CD14-positive monocyte (primary cell): ENCODE measurements at regions of chr7 and their contacts with region 1.

Region 1: DNA sequence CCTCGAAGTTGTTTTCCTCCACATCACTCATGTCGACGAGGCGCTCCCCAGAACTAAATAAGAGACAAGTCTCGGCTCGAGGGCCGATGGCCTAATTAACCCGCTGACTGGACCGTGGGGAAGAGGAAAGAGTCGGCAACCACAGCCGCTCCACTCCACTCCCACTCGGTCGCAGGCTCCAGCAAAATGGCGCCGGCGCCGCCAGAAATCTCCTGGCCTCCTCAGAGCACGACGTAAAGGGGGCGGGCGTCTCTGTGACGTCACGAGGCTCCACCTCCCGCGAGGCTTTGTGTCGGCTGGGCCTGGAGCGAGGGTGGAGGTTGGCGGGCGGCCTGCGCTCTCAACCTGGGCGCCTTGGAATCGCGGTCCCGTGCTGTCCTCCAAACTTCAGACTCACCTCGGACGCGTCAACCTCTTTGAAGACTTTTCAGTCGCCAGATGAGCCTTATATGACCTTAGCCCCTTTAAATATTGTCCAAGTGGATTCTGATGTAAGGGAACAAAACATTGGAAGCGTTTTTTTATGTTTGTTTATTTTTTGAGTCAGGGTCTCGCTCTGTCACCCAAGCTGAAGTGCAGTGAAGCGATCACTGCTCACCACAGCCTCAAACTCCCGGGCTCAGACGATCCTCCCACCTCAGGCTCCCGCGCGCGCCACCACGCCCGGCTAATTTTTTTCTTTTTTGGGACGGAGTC is at the start of gene TRA2A:
- DNase-seq: peak; percentile 93 to 95 (median 94)
- H3K4me3 ChIP-seq: peak within 1 kb of the TSS; percentile 77 to 97 (median 84)
- H3K4me3 Mint-ChIP-seq: peak within 1 kb of the TSS; percentile 98 to 99
- H3K27ac ChIP-seq: peak within 1 kb of the TSS; percentile 96 to 99
- H3K27ac Mint-ChIP-seq: peak within 1 kb of the TSS; percentile 100
- H3K4me1 ChIP-seq: peaks cover 11 to 34% of the 10 kb centered on the region in 2 donors
- H3K4me1 Mint-ChIP-seq: peaks cover 39% of the 10 kb centered on the region
- H3K27me3 ChIP-seq: no peaks in the 10 kb centered on the region
- H3K27me3 Mint-ChIP-seq: peaks cover 0 to 2% (median 2%) of the 10 kb centered on the region in 3 donors
- CTCF ChIP-seq: no peak
- polyA plus RNA-seq, gene TRA2A: 31.2 to 92.8 (median 46.6) TPM

Region 2: GRCh38 chr7:22822486-22823141 is 709.3 kb before region 1 on chr7 and contains the start of gene TOMM7:
- intact Hi-C with region 1: loop called in 1 of 2 experiments (anchors 5 kb)
- DNase-seq: peak; percentile 94 to 97 (median 95)
- H3K4me3 ChIP-seq: peak within 1 kb of the TSS; percentile 78 to 95 (median 84)
- H3K4me3 Mint-ChIP-seq: peak within 1 kb of the TSS; percentile 97 to 98
- H3K27ac ChIP-seq: peak within 1 kb of the TSS; percentile 18 to 91
- H3K27ac Mint-ChIP-seq: peak within 1 kb of the TSS; percentile 91 to 98 (median 96)
- H3K4me1 ChIP-seq: peaks cover 16 to 17% of the 10 kb centered on the region in 2 donors
- H3K4me1 Mint-ChIP-seq: peaks cover 16% of the 10 kb centered on the region
- H3K27me3 ChIP-seq: peaks cover 6 to 24% of the 10 kb centered on the region in 2 donors
- H3K27me3 Mint-ChIP-seq: peaks cover 23 to 27% (median 24%) of the 10 kb centered on the region in 3 donors
- CTCF ChIP-seq: no peak
- polyA plus RNA-seq, gene TOMM7: 93.3 to 125 (median 111) TPM

Region 3: DNA sequence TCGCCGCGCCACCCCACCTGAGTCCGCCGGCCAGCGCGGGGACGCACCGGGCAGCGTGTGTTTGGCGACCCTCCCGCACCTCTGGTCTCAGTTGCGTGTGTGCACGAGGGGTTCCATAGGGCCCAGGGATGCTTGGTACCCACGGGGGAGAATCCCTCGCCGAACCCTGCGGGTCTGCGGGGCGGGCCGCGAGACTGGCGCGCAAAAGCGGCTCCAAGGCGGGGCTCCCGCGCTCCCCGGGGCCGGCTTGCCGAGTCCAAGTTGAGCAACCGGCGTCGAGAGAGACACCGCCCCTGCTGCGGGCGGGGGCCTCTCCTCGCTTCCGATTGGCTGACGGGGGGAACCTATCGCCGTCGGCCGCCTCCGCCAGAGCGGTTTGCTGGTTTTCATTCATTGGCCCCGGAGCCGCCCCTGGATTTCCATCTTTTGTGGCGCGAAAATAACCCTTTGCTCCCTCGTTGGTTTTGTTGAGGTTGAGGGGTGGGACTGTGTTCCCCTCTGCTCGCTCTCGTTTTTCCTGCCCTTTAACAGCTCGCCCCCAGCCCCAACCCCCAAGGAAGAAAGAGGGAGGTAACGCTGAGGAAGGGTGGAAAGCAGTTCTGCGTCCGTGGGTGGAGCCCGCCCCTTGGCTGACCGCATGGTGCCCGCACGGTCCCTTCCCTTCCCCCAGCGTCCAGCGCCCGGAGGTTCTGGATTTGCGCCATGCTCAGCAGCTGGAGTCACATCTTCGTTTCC is 57.7 kb before region 1 on chr7:
- intact Hi-C with region 1: loop called in 1 of 2 experiments (anchors 10 kb)
- DNase-seq: peak; percentile 86 to 89 (median 87)
- H3K4me3 ChIP-seq: peak overlapping the region; percentile 30 to 73 (median 35)
- H3K4me3 Mint-ChIP-seq: peak overlapping the region; percentile 78 to 90
- H3K27ac ChIP-seq: no peak overlapping the region
- H3K27ac Mint-ChIP-seq: peak overlapping the region in 3 of 7 donors; percentile 34 to 82 (median 68)
- H3K4me1 ChIP-seq: peaks cover 36 to 46% of the 10 kb centered on the region in 2 donors
- H3K4me1 Mint-ChIP-seq: peaks cover 35% of the 10 kb centered on the region
- H3K27me3 ChIP-seq: peaks cover 75 to 93% of the 10 kb centered on the region in 2 donors
- H3K27me3 Mint-ChIP-seq: peaks cover 74 to 84% (median 75%) of the 10 kb centered on the region in 3 donors
- CTCF ChIP-seq: no peak

Region 4: GRCh38 chr7:23597094-23598091 is 65.5 kb after region 1 on chr7 and contains the start of gene CCDC126:
- intact Hi-C with region 1: loop called (anchors 5 to 10 kb)
- DNase-seq: peak; percentile 82 to 84 (median 83)
- H3K4me3 ChIP-seq: peak within 1 kb of the TSS; percentile 77 to 87 (median 85)
- H3K4me3 Mint-ChIP-seq: peak within 1 kb of the TSS; percentile 83 to 92
- H3K27ac ChIP-seq: peak within 1 kb of the TSS; percentile 72 to 91
- H3K27ac Mint-ChIP-seq: peak within 1 kb of the TSS; percentile 65 to 89 (median 84)
- H3K4me1 ChIP-seq: peaks cover 14 to 15% of the 10 kb centered on the region in 2 donors
- H3K4me1 Mint-ChIP-seq: peaks cover 23% of the 10 kb centered on the region
- H3K27me3 ChIP-seq: no peaks in the 10 kb centered on the region
- H3K27me3 Mint-ChIP-seq: peaks cover 9 to 23% (median 10%) of the 10 kb centered on the region in 3 donors
- CTCF ChIP-seq: no peak
- polyA plus RNA-seq, gene CCDC126: 3.5 to 20.1 (median 17.4) TPM